Common myeloid progenitor, CD34-positive (primary cell): ENCODE measurements at regions of chr20 and their contacts with region 1.

Region 1: DNA sequence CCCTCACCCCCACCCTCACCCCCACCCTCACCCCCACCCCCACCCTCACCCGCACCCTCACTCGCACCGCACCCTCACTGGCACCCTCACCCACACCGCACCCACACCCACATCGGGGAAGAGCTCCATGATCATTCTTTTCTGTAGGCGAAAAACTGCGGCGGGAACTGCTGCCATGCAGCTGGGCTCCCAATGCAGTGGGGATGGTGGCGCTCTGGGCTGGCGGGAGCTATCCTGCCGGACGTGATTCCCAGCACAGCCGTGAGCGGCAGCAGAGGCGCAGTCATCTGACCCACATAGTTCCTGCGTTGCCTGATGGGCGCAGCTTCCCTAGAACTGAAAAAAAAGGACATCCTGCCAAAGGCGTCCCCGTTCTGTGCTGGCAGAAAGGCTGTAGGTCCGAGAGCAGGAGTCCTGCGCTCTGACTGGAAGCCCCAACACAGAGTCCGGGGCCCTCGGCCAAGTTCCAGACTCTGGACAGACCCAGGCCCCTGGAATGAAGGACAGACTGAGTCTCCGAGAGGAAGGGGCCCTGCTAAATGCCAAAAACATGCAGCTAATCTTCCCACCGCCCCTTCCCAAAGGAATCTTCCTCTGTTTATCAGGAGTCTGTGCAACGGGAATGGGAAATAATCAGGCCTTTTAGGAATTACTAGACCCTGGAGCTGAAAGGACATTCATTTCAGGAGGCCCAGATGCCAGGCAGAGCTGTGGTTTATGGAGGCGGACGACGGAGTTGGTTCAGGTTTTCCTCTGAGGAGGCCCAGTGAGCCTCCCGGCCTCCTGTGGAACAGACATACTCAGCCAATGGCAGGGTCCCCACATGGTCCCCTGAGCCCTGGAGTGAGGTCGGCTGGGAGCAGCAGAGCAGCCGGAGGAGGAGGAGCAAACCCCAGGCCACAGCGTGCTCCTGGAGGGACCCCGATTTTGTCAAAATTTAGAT is 14.1 kb upstream of the TCFL5 start:
- DNase-seq: peak; percentile 42 to 71 (median 66)
- H3K4me3 ChIP-seq: no peak overlapping the region
- H3K27ac ChIP-seq: peak overlapping the region in 1 of 2 experiments; percentile 25
- H3K4me1 ChIP-seq: peaks cover 0 to 18% (median 5%) of the 10 kb centered on the region in 4 experiments
- H3K27me3 ChIP-seq: peaks cover 0 to under 1% (median 0%) of the 10 kb centered on the region in 5 experiments

Region 2: DNA sequence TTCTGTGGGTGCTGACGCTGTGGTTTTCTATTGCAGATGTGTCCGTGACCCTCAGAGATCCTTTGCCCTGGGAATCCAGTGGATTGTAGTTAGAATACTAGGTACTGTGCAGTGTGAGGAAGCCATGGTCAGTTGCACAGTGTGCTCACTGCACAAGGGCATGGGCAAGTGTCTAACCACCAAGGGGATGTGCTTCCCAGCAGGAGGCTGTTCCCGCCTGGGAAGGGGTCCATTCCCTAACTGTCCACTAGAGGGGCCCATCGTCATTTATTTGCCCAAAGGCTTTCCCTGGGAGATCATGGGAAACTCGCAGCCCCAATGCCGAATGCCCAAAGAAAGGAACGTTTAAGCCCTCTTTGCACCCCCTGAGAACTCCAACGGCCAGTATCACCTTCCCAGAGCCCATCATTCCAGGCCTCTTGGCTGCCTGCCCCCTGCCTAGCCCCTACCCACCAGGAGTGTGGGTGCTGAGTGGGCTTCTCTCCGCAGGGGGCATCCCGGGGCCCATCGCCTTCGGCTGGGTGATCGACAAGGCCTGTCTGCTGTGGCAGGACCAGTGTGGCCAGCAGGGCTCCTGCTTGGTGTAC is 207.2 kb before region 1 on chr20:
- CTCF ChIA-PET with region 1: no interaction called
- POLR2A ChIA-PET with region 1: no interaction called
- DNase-seq: peak in 2 of 3 donors; percentile 34 to 35
- H3K4me3 ChIP-seq: no peak overlapping the region
- H3K27ac ChIP-seq: no peak overlapping the region
- H3K4me1 ChIP-seq: no peaks in the 10 kb centered on the region
- H3K27me3 ChIP-seq: no peaks in the 10 kb centered on the region

Region 3: GRCh38 chr20:62832212-62832922 is 43.3 kb before region 1 on chr20:
- CTCF ChIA-PET with region 1: no interaction called
- POLR2A ChIA-PET with region 1: no interaction called
- DNase-seq: peak; percentile 61 to 89 (median 86)
- H3K4me3 ChIP-seq: peak overlapping the region in 4 of 7 experiments; percentile 4 to 37 (median 24)
- H3K27ac ChIP-seq: no peak overlapping the region
- H3K4me1 ChIP-seq: peaks cover 0 to 14% (median 14%) of the 10 kb centered on the region in 4 experiments
- H3K27me3 ChIP-seq: no peaks in the 10 kb centered on the region

Region 4: GRCh38 chr20:62887147-62887859 is 11.6 kb after region 1 on chr20:
- CTCF ChIA-PET with region 1: interaction called, 15 read pairs
- POLR2A ChIA-PET with region 1: no interaction called
- DNase-seq: peak; percentile 75 to 87 (median 82)
- H3K4me3 ChIP-seq: no peak overlapping the region
- H3K27ac ChIP-seq: no peak overlapping the region
- H3K4me1 ChIP-seq: peaks cover 0 to 8% (median 2%) of the 10 kb centered on the region in 4 experiments
- H3K27me3 ChIP-seq: no peaks in the 10 kb centered on the region

Region 5: GRCh38 chr20:62952373-62952967 is 76.8 kb after region 1 on chr20 and contains the start of gene SLC17A9:
- CTCF ChIA-PET with region 1: no interaction called
- POLR2A ChIA-PET with region 1: no interaction called
- DNase-seq: peak in 2 of 3 donors; percentile 57 to 70
- H3K4me3 ChIP-seq: peak within 1 kb of the TSS; percentile 23 to 90 (median 67)
- H3K27ac ChIP-seq: peak within 1 kb of the TSS; percentile 76 to 83
- H3K4me1 ChIP-seq: peaks cover 2 to 61% (median 56%) of the 10 kb centered on the region in 4 experiments
- H3K27me3 ChIP-seq: no peaks in the 10 kb centered on the region

Region 6: GRCh38 chr20:63032861-63033634 is 157.4 kb after region 1 on chr20:
- CTCF ChIA-PET with region 1: no interaction called
- POLR2A ChIA-PET with region 1: no interaction called
- DNase-seq: peak in 2 of 3 donors; percentile 59 to 60
- H3K4me3 ChIP-seq: peak overlapping the region in 5 of 7 experiments; percentile 25 to 54 (median 48)
- H3K27ac ChIP-seq: no peak overlapping the region
- H3K4me1 ChIP-seq: peaks cover 0 to 26% (median 12%) of the 10 kb centered on the region in 4 experiments
- H3K27me3 ChIP-seq: peaks cover 2 to 91% (median 28%) of the 10 kb centered on the region in 5 experiments